ENCODE measurements at regions of chr11 and their contacts with region 1.

Region 1: GRCh38 chr11:20647976-20648565 is 21.3 kb upstream of the NELL1 start:
- DNase-seq: peak in 4 of 10 donors; percentile 40 to 58 (median 44)

Region 2: GRCh38 chr11:20544603-20545237 is 103.4 kb before region 1 on chr11:
- intact Hi-C with region 1: no loop called
- DNase-seq: no peak

Region 3: GRCh38 chr11:20873054-20873453 is 225.0 kb after region 1 on chr11:
- intact Hi-C with region 1: loop called (anchors 10 kb)
- DNase-seq: peak in 1 of 10 donors; percentile 15

Region 4: GRCh38 chr11:21511835-21512440 is 863.9 kb after region 1 on chr11:
- intact Hi-C with region 1: loop called (anchors 5 kb)
- DNase-seq: peak in 7 of 10 donors; percentile 21 to 88 (median 54)

Region 5: DNA sequence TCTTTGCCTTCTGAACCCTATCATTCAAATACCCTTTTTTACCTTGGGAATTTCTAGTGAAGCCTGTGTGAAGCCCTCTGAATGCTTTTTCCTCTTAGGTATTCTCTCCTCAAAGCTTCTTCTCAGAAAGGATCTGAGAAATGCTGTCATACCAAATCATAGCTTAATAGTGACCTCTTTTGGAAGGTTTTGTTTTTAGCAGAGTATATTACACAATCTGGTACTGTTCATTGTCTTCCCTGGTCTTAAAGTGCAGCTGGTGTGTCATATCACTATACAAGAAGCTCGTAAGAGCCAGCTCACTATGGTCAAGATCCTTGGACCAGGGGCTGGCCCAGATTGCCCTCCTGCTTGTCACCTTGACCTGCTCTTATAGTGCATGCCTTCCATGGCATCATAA is 1340.4 kb after region 1 on chr11:
- intact Hi-C with region 1: loop called (anchors 5 kb)
- DNase-seq: no peak

Region 6: DNA sequence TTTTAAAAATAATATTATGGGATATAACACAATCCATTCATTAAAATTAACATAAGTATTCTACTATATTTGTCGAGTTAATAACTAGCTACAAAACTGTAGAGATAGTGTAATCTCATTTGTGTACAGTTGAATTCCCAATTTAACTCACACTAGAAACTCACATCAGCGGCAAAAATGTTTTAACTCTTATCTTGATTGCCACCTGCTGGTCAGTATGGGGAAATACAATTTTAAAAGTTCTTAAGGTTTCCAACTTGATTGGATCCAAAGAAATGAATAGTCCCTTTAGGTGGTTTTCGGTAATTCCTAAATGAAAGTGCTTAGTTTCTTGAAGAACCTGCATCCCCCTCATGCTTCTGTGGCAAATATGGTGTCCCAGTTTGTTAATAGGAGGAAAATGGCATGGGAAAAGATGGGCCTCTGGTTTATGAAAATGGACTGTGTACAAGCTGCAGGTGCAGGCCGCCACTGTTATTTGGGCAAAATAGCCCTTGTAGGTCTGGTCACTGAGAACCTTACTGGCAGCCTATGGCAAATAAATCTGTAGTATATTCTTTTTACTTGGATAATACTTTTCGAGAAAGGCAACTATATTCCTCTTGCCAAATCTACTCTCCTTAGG is 1656.4 kb after region 1 on chr11:
- intact Hi-C with region 1: loop called (anchors 10 kb)
- DNase-seq: no peak